ENCODE measurements at regions of chr21 and their contacts with region 1.

Region 1: GRCh38 chr21:42524349-42525151 is 10.9 kb downstream of the SLC37A1 start:
- DNase-seq: no peak
- ATAC-seq: peak; percentile 20; the same call in 2 of the 3 replicates
- H3K4me3 ChIP-seq: no peak overlapping the region
- H3K27ac ChIP-seq: no peak overlapping the region
- H3K4me1 ChIP-seq: peaks cover 0 to 4% of the 10 kb centered on the region in 2 experiments; a peak in 2 of 5 replicates
- H3K27me3 ChIP-seq: peaks cover 55 to 78% of the 10 kb centered on the region in 2 experiments
- CTCF ChIP-seq: no peak
- EP300 ChIP-seq: no peak
- POLR2A ChIP-seq: no peak
- RAD21 ChIP-seq: no peak

Region 2: DNA sequence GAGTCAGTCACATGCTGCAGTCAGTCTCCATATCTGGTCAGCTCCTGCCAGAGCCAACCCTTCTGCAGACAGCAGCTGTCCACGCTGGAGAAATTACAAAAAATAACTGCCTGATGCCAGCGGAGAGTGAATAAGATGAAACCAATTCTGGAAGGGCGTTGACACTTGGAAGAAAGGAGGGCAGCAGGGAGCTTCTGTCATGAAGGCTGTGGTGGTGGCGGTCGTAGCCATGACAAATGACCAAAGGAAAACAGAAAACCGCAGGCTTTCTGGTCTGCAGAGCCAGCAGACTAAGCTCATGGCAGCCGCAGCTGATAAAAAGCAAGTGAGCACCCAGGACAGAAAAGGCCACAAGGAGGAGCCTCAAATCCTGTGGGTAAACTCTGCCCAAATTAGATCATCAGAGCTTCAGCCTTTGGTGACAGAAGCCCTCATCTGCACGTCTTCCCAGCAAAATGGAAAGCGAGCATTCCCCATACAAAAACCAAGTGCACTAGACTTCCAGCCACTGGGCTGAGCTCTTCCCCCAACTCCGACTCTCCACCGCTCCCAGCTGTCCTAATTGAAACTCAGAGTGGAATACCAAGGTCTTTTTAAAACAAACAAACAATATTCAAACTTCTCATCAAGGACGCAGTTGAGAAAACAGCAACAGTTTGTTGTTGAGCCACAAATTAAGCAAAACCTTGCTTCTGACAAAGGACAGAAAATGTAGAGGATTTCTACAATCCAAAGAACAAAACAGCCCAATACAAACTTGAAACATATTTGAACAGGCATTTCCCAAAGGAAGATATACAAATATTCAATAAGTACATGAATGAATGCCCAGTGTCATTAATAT is 57.2 kb before region 1 on chr21:
- CTCF ChIA-PET with region 1: no interaction called
- POLR2A ChIA-PET with region 1: no interaction called
- in situ Hi-C with region 1: loop called (anchors 5 kb)
- intact Hi-C with region 1: no loop called
- DNase-seq: peak; percentile 63 to 78 (median 72)
- ATAC-seq: peak; percentile 81
- H3K4me3 ChIP-seq: no peak overlapping the region
- H3K27ac ChIP-seq: no peak overlapping the region
- H3K4me1 ChIP-seq: peaks cover 32 to 46% of the 10 kb centered on the region in 2 experiments
- H3K27me3 ChIP-seq: peaks cover 14 to 15% of the 10 kb centered on the region in 2 experiments; a peak in 4 of 5 replicates
- CTCF ChIP-seq: peak; percentile 58 to 73 (median 66)
- EP300 ChIP-seq: peak; percentile 31; the same call in 1 of the 2 replicates
- POLR2A ChIP-seq: no peak
- RAD21 ChIP-seq: peak; percentile 64 to 74

Region 3: GRCh38 chr21:42550817-42551216 is 26.3 kb after region 1 on chr21:
- CTCF ChIA-PET with region 1: no interaction called
- POLR2A ChIA-PET with region 1: no interaction called
- in situ Hi-C with region 1: no loop called
- intact Hi-C with region 1: no loop called
- DNase-seq: no peak
- ATAC-seq: no peak
- H3K4me3 ChIP-seq: no peak overlapping the region
- H3K27ac ChIP-seq: no peak overlapping the region
- H3K4me1 ChIP-seq: peaks cover 38 to 41% of the 10 kb centered on the region in 2 experiments
- H3K27me3 ChIP-seq: no peaks in the 10 kb centered on the region
- CTCF ChIP-seq: no peak
- EP300 ChIP-seq: no peak
- POLR2A ChIP-seq: no peak
- RAD21 ChIP-seq: no peak

Region 4: GRCh38 chr21:42574234-42575027 is 49.9 kb after region 1 on chr21:
- CTCF ChIA-PET with region 1: no interaction called
- POLR2A ChIA-PET with region 1: no interaction called
- in situ Hi-C with region 1: no loop called
- intact Hi-C with region 1: loop called (anchors 10 kb)
- DNase-seq: peak; percentile 45 to 55 (median 50)
- ATAC-seq: peak; percentile 82
- H3K4me3 ChIP-seq: no peak overlapping the region
- H3K27ac ChIP-seq: no peak overlapping the region
- H3K4me1 ChIP-seq: peaks cover 0 to 14% of the 10 kb centered on the region in 2 experiments; a peak in 3 of 5 replicates
- H3K27me3 ChIP-seq: peaks cover 18 to 59% of the 10 kb centered on the region in 2 experiments
- CTCF ChIP-seq: peak; percentile 49 to 78 (median 68)
- EP300 ChIP-seq: no peak
- POLR2A ChIP-seq: no peak
- RAD21 ChIP-seq: peak; percentile 32 to 48

Measured in K562 (cell line).